Gastrocnemius medialis (tissue), 4 donors: ENCODE measurements at regions of chr2 and their contacts with region 1.

Region 1: GRCh38 chr2:191521608-191522208 is 156.2 kb upstream of the NABP1 start:
- DNase-seq: no peak
- ATAC-seq: no peak
- H3K4me3 ChIP-seq: no peak overlapping the region
- H3K27ac ChIP-seq: no peak overlapping the region
- H3K4me1 ChIP-seq: no peaks in the 10 kb centered on the region
- H3K27me3 ChIP-seq: no peaks in the 10 kb centered on the region
- CTCF ChIP-seq: peak; percentile 54 to 71 (median 66)
- POLR2A ChIP-seq: no peak

Region 2: DNA sequence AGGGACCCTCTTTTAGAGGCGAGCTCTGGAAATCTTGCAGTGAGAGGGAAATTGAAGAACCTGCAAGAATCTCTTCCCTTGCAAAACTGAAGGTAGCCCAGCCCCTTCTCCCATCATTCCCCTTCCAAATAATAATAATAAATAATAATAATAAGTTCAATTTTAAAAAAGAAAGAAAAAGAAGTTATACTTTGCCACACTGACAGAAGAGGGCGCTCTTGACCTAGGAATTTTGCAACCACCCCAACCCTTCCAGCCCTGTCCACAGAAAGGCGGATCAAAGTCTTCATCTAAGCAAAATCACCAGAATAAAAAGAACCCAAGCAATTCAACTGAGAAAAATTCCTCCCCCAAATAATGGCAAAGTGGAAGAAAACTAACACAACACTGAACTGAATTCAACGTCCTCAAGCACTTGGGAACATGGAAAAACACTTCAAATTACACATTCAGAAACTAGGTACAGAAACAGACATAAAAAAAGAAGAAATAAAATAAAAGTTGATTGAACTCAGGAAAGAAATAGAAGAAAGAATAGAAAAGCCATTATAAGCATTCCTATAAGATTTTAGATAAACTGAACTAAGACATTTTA is 740.0 kb before region 1 on chr2:
- in situ Hi-C with region 1: loop called in 1 of 4 experiments (anchors 25 kb)
- intact Hi-C with region 1: no loop called
- DNase-seq: no peak
- ATAC-seq: no peak
- H3K4me3 ChIP-seq: no peak overlapping the region
- H3K27ac ChIP-seq: no peak overlapping the region
- H3K4me1 ChIP-seq: no peaks in the 10 kb centered on the region
- H3K27me3 ChIP-seq: no peaks in the 10 kb centered on the region
- CTCF ChIP-seq: peak; percentile 27 to 58 (median 40)
- POLR2A ChIP-seq: no peak

Region 3: GRCh38 chr2:191051825-191052778 is 469.6 kb before region 1 on chr2:
- in situ Hi-C with region 1: loop called in 2 of 4 experiments (anchors 10 to 25 kb)
- intact Hi-C with region 1: loop called (anchors 5 kb)
- DNase-seq: no peak
- ATAC-seq: no peak
- H3K4me3 ChIP-seq: no peak overlapping the region
- H3K27ac ChIP-seq: no peak overlapping the region
- H3K4me1 ChIP-seq: no peaks in the 10 kb centered on the region
- H3K27me3 ChIP-seq: no peaks in the 10 kb centered on the region
- CTCF ChIP-seq: peak in 4 of 5 experiments; percentile 21 to 43 (median 27)
- POLR2A ChIP-seq: no peak

Region 4: DNA sequence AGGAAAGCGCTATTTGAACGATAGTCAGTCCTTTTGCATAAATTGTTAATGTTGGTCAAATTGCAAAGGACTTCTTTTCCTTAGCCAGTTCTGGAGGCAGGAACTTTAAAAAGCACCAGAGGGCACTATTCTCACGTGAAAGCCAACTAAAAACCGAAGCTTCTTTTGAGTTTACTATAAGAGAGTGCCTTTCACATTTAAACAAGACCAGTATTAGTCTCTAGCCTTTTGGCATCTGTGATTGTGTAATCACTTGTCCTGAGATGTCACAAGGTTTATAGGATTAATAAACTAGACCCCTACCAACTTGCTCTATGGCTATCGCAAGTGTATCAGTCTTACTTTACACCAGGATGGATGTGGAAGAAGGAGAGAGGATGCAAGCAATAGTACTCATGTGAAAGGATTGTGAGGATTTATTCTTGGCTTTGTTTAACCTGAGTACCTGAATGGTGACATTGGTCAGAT is 356.5 kb before region 1 on chr2:
- in situ Hi-C with region 1: loop called (anchors 10 to 25 kb)
- intact Hi-C with region 1: loop called (anchors 1 kb)
- DNase-seq: no peak
- ATAC-seq: peak; percentile 69 to 77
- H3K4me3 ChIP-seq: peak overlapping the region in 1 of 4 donors; percentile 38
- H3K27ac ChIP-seq: no peak overlapping the region
- H3K4me1 ChIP-seq: peaks cover 19 to 23% of the 10 kb centered on the region in 2 donors
- H3K27me3 ChIP-seq: no peaks in the 10 kb centered on the region
- CTCF ChIP-seq: peak in 4 of 5 experiments; percentile 22 to 65 (median 55)
- POLR2A ChIP-seq: no peak

Region 5: DNA sequence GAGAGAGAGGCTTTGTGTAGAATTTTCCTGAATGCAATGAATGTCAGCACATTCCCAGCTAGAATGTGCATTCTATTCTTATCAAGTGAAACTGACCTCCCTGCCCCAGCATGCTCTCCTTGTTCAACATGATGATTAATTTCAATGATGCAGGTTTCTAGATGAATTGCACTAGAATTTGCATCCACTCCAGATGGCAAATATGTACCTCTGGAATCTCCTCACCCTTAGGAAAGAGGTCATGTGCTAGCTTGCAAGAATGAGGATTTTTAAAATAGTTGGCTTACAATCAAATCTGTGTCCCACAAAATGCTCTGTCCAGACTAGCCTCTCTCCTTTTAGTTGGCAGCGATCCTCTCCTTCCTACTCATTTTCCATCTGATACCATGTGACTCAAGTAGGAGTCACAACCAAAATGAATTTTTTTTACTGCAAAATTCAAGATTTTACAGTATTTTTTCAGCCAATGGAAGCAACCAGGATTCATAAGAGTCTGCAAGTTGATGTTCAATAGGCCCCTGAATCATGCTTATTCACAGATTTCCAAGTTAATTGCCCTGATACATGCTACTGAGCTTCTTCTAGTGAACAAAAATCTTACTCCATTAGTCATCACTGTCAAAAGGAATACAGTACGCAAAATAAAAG is 349.9 kb before region 1 on chr2:
- in situ Hi-C with region 1: loop called (anchors 10 to 25 kb)
- intact Hi-C with region 1: no loop called
- DNase-seq: no peak
- ATAC-seq: no peak
- H3K4me3 ChIP-seq: no peak overlapping the region
- H3K27ac ChIP-seq: no peak overlapping the region
- H3K4me1 ChIP-seq: peaks cover 7 to 8% of the 10 kb centered on the region in 2 donors
- H3K27me3 ChIP-seq: no peaks in the 10 kb centered on the region
- CTCF ChIP-seq: no peak
- POLR2A ChIP-seq: no peak

Region 6: GRCh38 chr2:191218292-191218898 is 303.3 kb before region 1 on chr2:
- in situ Hi-C with region 1: no loop called
- intact Hi-C with region 1: loop called (anchors 2 kb)
- DNase-seq: no peak
- ATAC-seq: peak in 1 of 2 donors; percentile 36
- H3K4me3 ChIP-seq: no peak overlapping the region
- H3K27ac ChIP-seq: no peak overlapping the region
- H3K4me1 ChIP-seq: peaks cover 0 to 6% of the 10 kb centered on the region in 2 donors
- H3K27me3 ChIP-seq: no peaks in the 10 kb centered on the region
- CTCF ChIP-seq: peak in 4 of 5 experiments; percentile 14 to 57 (median 44)
- POLR2A ChIP-seq: no peak

Region 7: GRCh38 chr2:191245046-191245868 is 276.5 kb before region 1 on chr2 and contains the start of gene MYO1B:
- in situ Hi-C with region 1: loop called in 1 of 4 experiments (anchors 25 kb)
- intact Hi-C with region 1: no loop called
- DNase-seq: peak in 1 of 2 donors; percentile 6
- ATAC-seq: peak in 1 of 2 donors; percentile 37
- H3K4me3 ChIP-seq: peak within 1 kb of the TSS; percentile 59 to 67 (median 66)
- H3K27ac ChIP-seq: peak within 1 kb of the TSS; percentile 41 to 67 (median 62)
- H3K4me1 ChIP-seq: peaks cover 3 to 7% of the 10 kb centered on the region in 2 donors
- H3K27me3 ChIP-seq: no peaks in the 10 kb centered on the region
- CTCF ChIP-seq: peak in 3 of 5 experiments; percentile 17 to 44 (median 41)
- POLR2A ChIP-seq: peak; percentile 23 to 53
- total RNA-seq, gene MYO1B: 7.0 to 10.8 (median 10.0) TPM

Region 8: DNA sequence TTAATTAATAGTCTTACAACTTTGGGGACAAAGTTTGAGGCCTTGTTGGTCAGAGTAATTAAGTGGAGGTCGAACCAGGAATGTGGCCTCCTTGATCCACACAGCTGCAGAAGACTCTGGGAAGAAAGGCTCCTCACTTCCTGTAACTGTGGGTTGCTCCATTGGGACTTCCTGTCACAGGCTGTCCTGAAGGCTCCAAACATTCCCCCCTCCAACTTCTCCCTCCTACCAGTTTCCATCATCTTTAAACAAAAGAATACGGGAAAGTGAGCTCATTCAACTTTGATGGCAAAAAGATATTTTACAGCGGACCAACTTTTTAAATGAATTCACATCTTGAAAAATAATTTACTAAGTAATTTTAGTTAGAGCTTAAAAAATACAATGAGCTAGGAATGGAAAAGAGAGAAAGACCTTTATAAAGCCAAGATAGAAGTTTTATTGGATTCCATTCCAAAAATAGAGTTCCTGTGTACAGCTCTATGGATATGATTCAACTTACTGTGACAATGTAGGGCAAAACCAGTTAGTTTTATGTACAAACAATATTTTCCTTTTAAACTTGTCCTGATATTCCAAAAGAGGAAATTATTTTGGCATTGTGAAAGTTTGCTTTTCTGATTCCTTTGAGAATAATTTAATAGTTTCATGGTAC is 55.8 kb before region 1 on chr2:
- in situ Hi-C with region 1: no loop called
- intact Hi-C with region 1: no loop called
- DNase-seq: no peak
- ATAC-seq: no peak
- H3K4me3 ChIP-seq: no peak overlapping the region
- H3K27ac ChIP-seq: peak overlapping the region in 2 of 4 donors; percentile 3 to 37
- H3K4me1 ChIP-seq: no peaks in the 10 kb centered on the region
- H3K27me3 ChIP-seq: no peaks in the 10 kb centered on the region
- CTCF ChIP-seq: no peak
- POLR2A ChIP-seq: no peak